Sigmoid colon (tissue), 7 donors: ENCODE measurements at regions of chr3 and their contacts with region 1.

Region 1: GRCh38 chr3:51941798-51942602 is at the starts of genes PARP3 and RRP9:
- DNase-seq: peak; percentile 100
- H3K4me3 ChIP-seq: peak within 1 kb of the TSS; percentile 61 to 87 (median 75)
- H3K27ac ChIP-seq: peak within 1 kb of the TSS; percentile 89 to 97 (median 96)
- H3K4me1 ChIP-seq: peaks cover 0 to 37% (median 33%) of the 10 kb centered on the region in 4 donors
- H3K27me3 ChIP-seq: no peaks in the 10 kb centered on the region
- CTCF ChIP-seq: peak; percentile 97 to 100 (median 98)
- EP300 ChIP-seq: no peak
- POLR2A ChIP-seq: peak; percentile 63 to 68
- total RNA-seq, gene PARP3: 22.4 to 35.8 (median 26.7) TPM
- total RNA-seq, gene RRP9: 6.4 to 13.3 (median 12.4) TPM

Region 2: GRCh38 chr3:51498876-51499738 is 442.9 kb before region 1 on chr3:
- intact Hi-C with region 1: loop called (anchors 10 kb)
- DNase-seq: peak; percentile 98
- H3K4me3 ChIP-seq: peak overlapping the region; percentile 59 to 94 (median 92)
- H3K27ac ChIP-seq: peak overlapping the region; percentile 98 to 100 (median 98)
- H3K4me1 ChIP-seq: peaks cover 0 to 20% (median 11%) of the 10 kb centered on the region in 4 donors
- H3K27me3 ChIP-seq: no peaks in the 10 kb centered on the region
- CTCF ChIP-seq: no peak
- EP300 ChIP-seq: no peak
- POLR2A ChIP-seq: peak in 1 of 2 donors; percentile 31

Region 3: GRCh38 chr3:51961011-51961410 is 19.0 kb after region 1 on chr3:
- intact Hi-C with region 1: no loop called
- DNase-seq: no peak
- H3K4me3 ChIP-seq: no peak overlapping the region
- H3K27ac ChIP-seq: no peak overlapping the region
- H3K4me1 ChIP-seq: peaks cover 0 to 43% (median 28%) of the 10 kb centered on the region in 4 donors
- H3K27me3 ChIP-seq: no peaks in the 10 kb centered on the region
- CTCF ChIP-seq: no peak
- EP300 ChIP-seq: no peak
- POLR2A ChIP-seq: no peak

Region 4: GRCh38 chr3:51974963-51975851 is 33.2 kb after region 1 on chr3 and contains the start of gene ABHD14A:
- intact Hi-C with region 1: loop called (anchors 1 kb)
- DNase-seq: peak; percentile 91
- H3K4me3 ChIP-seq: peak within 1 kb of the TSS; percentile 64 to 76 (median 72)
- H3K27ac ChIP-seq: peak within 1 kb of the TSS; percentile 88 to 95 (median 94)
- H3K4me1 ChIP-seq: peaks cover 0 to 32% (median 25%) of the 10 kb centered on the region in 4 donors
- H3K27me3 ChIP-seq: no peaks in the 10 kb centered on the region
- CTCF ChIP-seq: peak in 1 of 4 experiments; percentile 10
- EP300 ChIP-seq: no peak
- POLR2A ChIP-seq: peak in 1 of 2 donors; percentile 41
- total RNA-seq, gene ABHD14A: 16.3 to 35.3 (median 22.1) TPM

Region 5: DNA sequence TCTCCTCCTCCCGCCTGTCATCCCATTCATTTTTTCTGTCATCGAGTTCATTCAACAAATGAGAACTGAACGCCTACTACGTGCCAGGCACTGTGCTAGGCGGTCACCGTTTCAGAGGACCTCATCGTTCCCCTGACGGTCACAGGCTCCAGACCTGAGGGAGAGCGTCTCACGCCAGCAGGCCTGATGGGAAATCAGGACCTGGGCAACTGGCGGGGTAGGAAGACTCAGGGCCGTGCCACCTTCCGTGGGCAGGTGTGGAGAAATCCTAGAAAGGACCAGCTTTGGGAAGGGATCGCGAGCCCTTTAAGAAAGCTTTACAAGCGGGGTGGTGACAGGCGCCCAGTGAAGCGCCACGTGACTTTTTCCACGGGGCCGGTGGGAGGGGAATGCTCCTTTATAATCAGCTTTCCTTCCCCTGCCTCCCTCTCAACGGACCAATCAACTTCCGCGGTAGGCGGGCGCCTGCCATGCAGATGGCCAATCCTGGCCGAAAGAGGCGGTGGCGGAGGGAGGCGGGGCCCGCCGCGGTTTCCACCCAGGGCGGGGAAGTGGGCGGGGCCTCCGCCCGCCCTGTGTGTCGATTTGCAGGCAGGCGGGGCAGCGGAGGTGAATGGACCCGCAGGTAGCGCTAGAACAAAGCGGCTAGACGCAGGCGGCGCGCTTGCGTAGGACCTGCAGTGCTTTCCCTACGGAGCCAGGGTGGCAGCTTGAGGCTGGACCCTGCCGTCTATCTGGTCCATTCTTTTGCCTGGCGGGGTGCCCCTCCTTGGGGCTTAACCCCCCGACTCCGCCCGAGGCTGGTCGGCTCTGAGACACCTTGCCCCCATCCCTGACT is 115.2 kb after region 1 on chr3:
- intact Hi-C with region 1: loop called (anchors 2 kb)
- DNase-seq: peak; percentile 100
- H3K4me3 ChIP-seq: peak overlapping the region; percentile 51 to 83 (median 71)
- H3K27ac ChIP-seq: peak overlapping the region; percentile 88 to 94 (median 91)
- H3K4me1 ChIP-seq: peaks cover 0 to 45% (median 40%) of the 10 kb centered on the region in 4 donors
- H3K27me3 ChIP-seq: no peaks in the 10 kb centered on the region
- CTCF ChIP-seq: no peak
- EP300 ChIP-seq: peak in 1 of 4 donors; percentile 49
- POLR2A ChIP-seq: no peak

Region 6: DNA sequence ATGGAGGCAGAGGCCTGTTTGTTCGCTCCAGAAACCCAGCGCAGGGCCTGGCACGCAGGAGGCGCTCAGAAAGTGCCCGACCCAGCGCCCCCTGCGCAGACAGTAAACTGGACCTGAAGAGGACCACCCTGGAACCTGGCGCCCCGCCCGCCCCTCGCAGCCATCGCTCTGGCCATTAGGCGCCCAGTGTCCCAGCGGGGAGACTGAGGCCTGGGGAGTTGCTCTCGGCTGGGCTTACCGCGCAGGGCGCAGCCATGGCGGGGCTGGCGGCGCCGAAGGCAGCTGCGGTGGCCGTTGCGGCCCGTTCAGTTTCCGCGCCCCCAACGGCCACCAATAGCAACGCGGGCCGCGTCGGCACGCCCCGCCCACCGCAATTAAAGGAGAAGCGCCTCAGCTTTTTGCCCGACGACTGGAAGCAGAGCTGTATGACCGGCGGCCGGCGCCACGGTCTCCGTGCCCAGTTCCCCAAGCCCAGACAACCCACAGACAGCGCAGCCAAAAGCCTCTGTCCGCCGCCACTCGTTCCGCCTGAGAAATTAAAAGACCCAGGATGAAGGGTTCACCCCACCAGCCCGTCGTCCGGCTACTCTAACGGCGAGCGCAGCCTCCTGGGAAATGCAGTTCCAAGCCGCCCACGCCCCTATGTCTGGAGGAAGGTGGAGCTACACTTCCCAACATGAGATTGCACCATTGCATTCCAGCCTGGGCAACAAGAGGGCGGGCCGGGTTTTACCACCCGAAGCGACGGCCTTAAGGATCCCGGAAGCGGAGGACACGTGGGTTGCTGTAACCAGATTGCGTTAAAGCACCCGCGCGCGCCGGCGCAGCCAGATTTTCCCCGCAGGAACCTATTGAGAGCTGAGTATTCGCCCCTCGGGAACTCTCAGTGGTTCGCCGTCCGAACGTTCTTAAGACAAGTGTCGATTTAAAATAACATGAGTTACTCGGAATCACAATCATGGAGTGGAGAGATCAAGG is 212.4 kb after region 1 on chr3 and contains the start of gene POC1A:
- intact Hi-C with region 1: loop called (anchors 5 kb)
- DNase-seq: peak; percentile 99
- H3K4me3 ChIP-seq: peak within 1 kb of the TSS; percentile 47 to 65 (median 60)
- H3K27ac ChIP-seq: peak within 1 kb of the TSS; percentile 85 to 92 (median 86)
- H3K4me1 ChIP-seq: peaks cover 0 to 17% (median 14%) of the 10 kb centered on the region in 4 donors
- H3K27me3 ChIP-seq: no peaks in the 10 kb centered on the region
- CTCF ChIP-seq: peak in 3 of 4 experiments; percentile 20 to 40 (median 36)
- EP300 ChIP-seq: peak in 1 of 4 donors; percentile 56
- POLR2A ChIP-seq: peak in 1 of 2 donors; percentile 33
- total RNA-seq, gene POC1A: 0.66 to 1.7 (median 1.2) TPM

Region 7: DNA sequence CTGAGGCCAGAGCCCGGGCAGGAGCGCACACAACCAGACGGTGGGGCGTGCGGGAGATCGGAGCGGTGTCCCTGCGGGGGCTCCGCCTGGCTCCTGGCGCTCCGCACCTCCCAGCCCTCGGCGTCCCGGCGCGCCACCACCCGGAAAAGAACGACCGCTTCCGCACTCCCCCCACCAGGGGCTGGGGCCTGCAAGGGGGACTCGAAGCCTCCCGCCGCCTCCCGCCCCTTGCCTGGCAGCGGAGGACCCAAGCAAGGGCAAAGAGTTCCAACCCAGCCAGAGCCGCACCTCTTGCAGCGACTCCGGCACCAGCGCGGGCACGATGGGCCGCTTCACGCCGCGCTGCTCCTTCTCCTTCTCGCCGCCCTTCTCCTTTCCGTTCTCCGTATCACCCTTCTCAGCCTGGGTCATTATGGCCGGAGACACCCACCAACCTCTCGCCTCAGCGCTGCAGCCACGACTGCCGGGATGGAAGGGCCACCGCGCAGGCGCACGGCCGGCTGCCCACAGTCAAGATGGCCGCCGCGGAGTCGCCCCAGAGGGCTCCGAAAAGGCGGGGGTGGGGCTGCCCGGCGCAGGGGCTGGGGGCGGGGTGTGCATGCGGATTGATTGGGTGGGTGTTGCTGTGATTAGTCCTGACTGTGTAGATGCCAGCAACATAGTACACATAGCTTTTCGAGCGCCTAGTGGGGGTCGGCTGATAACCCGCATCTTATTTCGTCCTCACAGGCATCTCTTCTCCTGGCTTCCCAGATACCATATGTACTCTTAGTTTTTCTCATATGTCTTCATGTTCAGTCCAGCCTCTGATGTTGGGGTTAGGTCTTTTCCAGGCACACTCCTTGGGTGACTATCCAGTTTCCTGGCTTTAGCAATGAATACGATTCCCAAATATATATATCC is 1939.9 kb after region 1 on chr3 and contains the start of gene ACTR8:
- intact Hi-C with region 1: loop called (anchors 5 kb)
- DNase-seq: peak; percentile 92
- H3K4me3 ChIP-seq: peak within 1 kb of the TSS; percentile 70 to 87 (median 77)
- H3K27ac ChIP-seq: peak within 1 kb of the TSS; percentile 83 to 90 (median 86)
- H3K4me1 ChIP-seq: peaks cover 0 to 16% (median 12%) of the 10 kb centered on the region in 4 donors
- H3K27me3 ChIP-seq: no peaks in the 10 kb centered on the region
- CTCF ChIP-seq: peak in 1 of 4 experiments; percentile 10
- EP300 ChIP-seq: no peak
- POLR2A ChIP-seq: peak in 1 of 2 donors; percentile 46
- total RNA-seq, gene ACTR8: 18.5 to 30.7 (median 20.4) TPM